ENCODE measurements at regions of chr7 and their contacts with region 1.

Region 1: GRCh38 chr7:38360776-38361175 is 87.3 kb upstream of the TARP start:
- DNase-seq: no peak
- ATAC-seq: no peak
- H3K4me3 ChIP-seq: no peak overlapping the region
- H3K27ac ChIP-seq: no peak overlapping the region
- H3K4me1 ChIP-seq: no peaks in the 10 kb centered on the region
- H3K27me3 ChIP-seq: no peaks in the 10 kb centered on the region

Region 2: GRCh38 chr7:38339953-38340819 is 20.6 kb before region 1 on chr7:
- intact Hi-C with region 1: loop called in 1 of 4 experiments (anchors 2 kb)
- DNase-seq: no peak
- ATAC-seq: no peak
- H3K4me3 ChIP-seq: no peak overlapping the region
- H3K27ac ChIP-seq: no peak overlapping the region
- H3K4me1 ChIP-seq: peaks cover 3% of the 10 kb centered on the region
- H3K27me3 ChIP-seq: no peaks in the 10 kb centered on the region

Region 3: DNA sequence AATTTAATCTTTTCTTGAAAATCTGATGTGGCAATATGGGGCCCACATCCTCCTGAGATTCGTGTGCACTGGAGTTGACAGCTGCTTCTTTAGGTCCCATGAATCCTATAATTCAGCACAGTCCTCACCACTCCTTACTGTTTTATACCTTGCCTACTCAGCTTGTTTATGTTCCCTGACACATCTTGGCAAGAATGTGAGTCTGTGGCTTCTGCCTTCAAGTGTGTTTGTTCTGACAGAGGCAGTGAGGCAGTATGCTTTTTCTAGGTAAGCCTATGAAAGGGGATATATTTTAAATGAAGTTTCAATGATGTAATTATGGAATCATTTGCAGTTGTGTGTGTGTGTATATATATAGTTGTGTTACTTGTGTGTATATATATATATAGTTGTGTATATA is 164.0 kb after region 1 on chr7:
- intact Hi-C with region 1: no loop called
- DNase-seq: no peak
- ATAC-seq: no peak
- H3K4me3 ChIP-seq: no peak overlapping the region
- H3K27ac ChIP-seq: no peak overlapping the region
- H3K4me1 ChIP-seq: no peaks in the 10 kb centered on the region
- H3K27me3 ChIP-seq: no peaks in the 10 kb centered on the region

Region 4: GRCh38 chr7:38574086-38574485 is 213.3 kb after region 1 on chr7:
- intact Hi-C with region 1: no loop called
- DNase-seq: no peak
- ATAC-seq: no peak
- H3K4me3 ChIP-seq: no peak overlapping the region
- H3K27ac ChIP-seq: no peak overlapping the region
- H3K4me1 ChIP-seq: no peaks in the 10 kb centered on the region
- H3K27me3 ChIP-seq: no peaks in the 10 kb centered on the region

Measured in right cardiac atrium (tissue), 5 donors.